ENCODE measurements at regions of chr9 and their contacts with region 1.

Region 1: DNA sequence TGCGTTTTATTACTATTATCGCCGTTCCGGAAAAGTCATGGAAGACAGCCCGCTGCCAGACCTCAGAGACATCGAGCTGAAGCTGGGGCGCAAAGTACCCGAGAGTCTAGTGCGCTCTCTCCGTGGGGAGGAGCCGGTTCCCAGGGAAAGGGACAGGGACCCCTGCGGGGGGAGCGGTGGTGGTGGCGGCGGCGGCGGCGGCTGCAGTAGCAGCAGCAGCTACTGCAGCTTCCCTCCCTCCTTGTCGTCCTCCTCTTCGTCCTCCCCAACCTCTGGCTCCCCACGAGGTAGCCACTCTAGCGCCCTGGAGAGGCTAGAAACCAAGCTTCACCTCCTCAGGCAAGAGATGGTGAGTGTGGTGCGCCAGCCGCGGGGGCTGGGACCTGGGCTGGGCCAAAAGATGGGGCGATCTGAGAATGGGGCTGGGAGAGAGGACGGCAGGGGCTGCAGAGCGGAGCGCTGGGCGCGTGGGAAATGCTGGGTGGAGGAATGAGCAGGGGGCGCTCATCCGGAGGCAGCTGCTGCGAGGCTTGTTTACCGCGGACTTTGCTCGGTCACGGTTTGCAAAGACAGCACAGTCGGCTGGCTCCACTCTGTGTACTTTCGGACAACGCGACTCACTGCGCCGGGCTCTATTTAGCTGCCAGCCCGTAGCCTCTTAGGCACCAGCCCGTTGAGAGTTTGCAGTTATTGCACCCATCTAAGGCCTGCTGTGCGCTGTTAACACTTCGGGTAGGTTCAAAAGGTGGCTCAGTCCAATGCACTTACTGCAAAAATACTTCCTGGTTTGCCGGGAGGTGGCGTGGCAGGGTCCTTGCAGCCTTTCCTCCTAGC is 1.1 kb downstream of the LURAP1L start:
- DNase-seq: peak; percentile 62
- H3K4me3 ChIP-seq: peak overlapping the region; percentile 49
- H3K4me3 Mint-ChIP-seq: peak overlapping the region; percentile 89
- H3K27ac Mint-ChIP-seq: no peak overlapping the region
- H3K4me1 ChIP-seq: no peaks in the 10 kb centered on the region; the same call in 1 of the 2 replicates
- H3K4me1 Mint-ChIP-seq: no peaks in the 10 kb centered on the region
- H3K27me3 ChIP-seq: no peaks in the 10 kb centered on the region
- H3K27me3 Mint-ChIP-seq: no peaks in the 10 kb centered on the region
- CTCF ChIP-seq: peak in 1 of 2 experiments; percentile 33

Region 2: DNA sequence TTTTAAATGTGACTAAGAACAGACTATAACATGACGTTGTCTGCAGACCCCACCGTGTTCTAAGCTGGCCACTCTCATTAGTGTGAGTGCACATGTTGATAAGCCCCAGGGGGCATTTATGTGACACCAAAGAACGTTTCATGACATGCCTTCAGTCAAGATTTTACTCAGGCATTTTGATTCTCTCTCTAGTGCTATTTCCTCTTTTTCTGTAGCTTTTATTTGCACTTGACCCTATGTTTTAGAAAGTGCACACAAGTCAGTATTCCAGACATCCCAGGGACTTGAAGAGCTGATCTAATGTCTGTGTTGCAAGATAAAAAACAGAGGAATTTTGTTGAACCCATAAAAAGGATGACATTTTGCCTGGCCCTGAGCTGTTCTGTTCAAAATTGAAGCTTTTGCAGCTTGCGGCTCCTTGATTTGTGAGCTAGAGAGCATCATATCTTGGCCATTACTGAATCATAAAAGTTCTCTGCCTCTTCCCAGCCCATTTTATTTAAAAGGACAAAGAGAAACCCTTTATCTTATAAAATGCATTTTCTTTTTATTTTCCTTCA is 163.6 kb before region 1 on chr9:
- CTCF ChIA-PET with region 1: no interaction called
- POLR2A ChIA-PET with region 1: no interaction called
- intact Hi-C with region 1: no loop called
- DNase-seq: no peak
- H3K4me3 ChIP-seq: no peak overlapping the region
- H3K4me3 Mint-ChIP-seq: no peak overlapping the region
- H3K27ac Mint-ChIP-seq: no peak overlapping the region
- H3K4me1 ChIP-seq: no peaks in the 10 kb centered on the region
- H3K4me1 Mint-ChIP-seq: peaks cover 6% of the 10 kb centered on the region
- H3K27me3 ChIP-seq: no peaks in the 10 kb centered on the region
- H3K27me3 Mint-ChIP-seq: no peaks in the 10 kb centered on the region
- CTCF ChIP-seq: no peak

Region 3: GRCh38 chr9:12813960-12814876 is 38.3 kb after region 1 on chr9:
- CTCF ChIA-PET with region 1: no interaction called
- POLR2A ChIA-PET with region 1: no interaction called
- intact Hi-C with region 1: loop called (anchors 1 kb)
- DNase-seq: peak; percentile 45 to 46
- H3K4me3 ChIP-seq: no peak overlapping the region
- H3K4me3 Mint-ChIP-seq: no peak overlapping the region
- H3K27ac Mint-ChIP-seq: peak overlapping the region; percentile 82
- H3K4me1 ChIP-seq: no peaks in the 10 kb centered on the region
- H3K4me1 Mint-ChIP-seq: no peaks in the 10 kb centered on the region
- H3K27me3 ChIP-seq: no peaks in the 10 kb centered on the region
- H3K27me3 Mint-ChIP-seq: no peaks in the 10 kb centered on the region
- CTCF ChIP-seq: no peak

Region 4: DNA sequence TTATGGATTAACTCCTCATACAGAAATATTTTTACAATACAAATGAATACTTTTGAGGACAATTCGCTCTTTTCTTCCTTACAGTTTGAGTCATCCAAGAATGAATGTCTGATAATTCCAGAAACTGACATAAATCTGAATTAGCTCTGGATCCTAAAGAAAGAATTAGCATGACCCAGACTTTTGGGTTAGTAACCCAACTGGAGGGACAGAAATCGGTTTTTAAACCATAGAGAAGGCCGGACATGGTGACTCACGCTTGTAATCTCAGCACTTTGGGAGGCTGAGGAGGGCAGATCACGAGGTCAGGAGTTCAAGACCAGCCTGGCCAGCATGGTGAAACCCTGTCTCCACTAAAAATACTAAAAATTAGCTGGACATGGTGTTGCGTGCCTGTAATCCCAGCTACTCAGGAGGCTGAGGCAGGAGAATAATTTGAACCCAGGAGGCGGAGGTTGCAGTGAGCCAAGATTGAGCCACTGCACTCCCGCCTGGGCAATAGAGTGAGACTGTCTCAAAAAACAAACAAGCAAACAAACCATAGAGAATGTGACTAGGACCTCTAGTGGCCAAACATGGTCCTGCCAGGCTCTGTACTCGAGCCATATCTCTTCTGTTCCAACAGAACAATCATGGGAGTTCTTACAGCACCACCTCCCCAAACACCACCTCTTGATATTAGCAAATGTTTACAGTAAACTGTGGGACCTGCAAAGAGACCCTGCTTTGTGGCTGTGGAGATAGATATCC is 43.7 kb after region 1 on chr9:
- CTCF ChIA-PET with region 1: no interaction called
- POLR2A ChIA-PET with region 1: no interaction called
- intact Hi-C with region 1: loop called (anchors 1 kb)
- DNase-seq: peak in 1 of 2 experiments; percentile 19
- H3K4me3 ChIP-seq: no peak overlapping the region
- H3K4me3 Mint-ChIP-seq: no peak overlapping the region
- H3K27ac Mint-ChIP-seq: no peak overlapping the region
- H3K4me1 ChIP-seq: no peaks in the 10 kb centered on the region
- H3K4me1 Mint-ChIP-seq: no peaks in the 10 kb centered on the region
- H3K27me3 ChIP-seq: no peaks in the 10 kb centered on the region
- H3K27me3 Mint-ChIP-seq: no peaks in the 10 kb centered on the region
- CTCF ChIP-seq: peak; percentile 26 to 31

Region 5: DNA sequence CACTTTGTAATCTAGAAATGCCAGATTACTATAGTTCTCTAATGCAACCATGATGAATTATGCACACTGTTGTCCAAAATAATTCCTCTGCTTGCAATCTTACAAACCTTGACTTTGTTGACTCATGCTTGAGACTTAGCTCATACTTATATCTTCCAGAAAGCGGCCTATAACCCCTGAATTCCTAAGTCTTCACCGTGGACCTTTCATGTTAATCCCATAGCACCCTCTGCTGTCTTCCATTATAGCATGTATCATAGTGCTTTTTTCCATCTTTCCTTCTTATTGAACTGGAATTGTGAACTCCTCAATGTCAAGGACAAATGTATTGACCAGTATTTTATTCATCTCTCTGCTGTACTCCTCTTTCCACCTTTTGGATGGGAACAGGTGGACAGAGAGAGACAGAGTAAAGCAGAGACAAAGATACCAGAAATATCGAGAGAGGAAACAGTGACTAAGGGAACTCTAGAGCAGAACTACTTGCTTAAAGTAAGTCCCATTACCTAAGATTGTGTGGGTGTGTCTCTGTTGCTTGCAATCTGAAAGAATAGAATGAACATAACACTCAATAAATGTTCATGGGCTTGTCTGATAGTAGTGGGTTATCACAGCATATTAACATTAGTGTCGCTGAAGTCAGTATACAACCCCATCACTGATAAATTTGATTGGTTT is 109.0 kb after region 1 on chr9:
- CTCF ChIA-PET with region 1: no interaction called
- POLR2A ChIA-PET with region 1: no interaction called
- intact Hi-C with region 1: loop called (anchors 1 kb)
- DNase-seq: peak in 1 of 2 experiments; percentile 5
- H3K4me3 ChIP-seq: no peak overlapping the region
- H3K4me3 Mint-ChIP-seq: no peak overlapping the region
- H3K27ac Mint-ChIP-seq: no peak overlapping the region
- H3K4me1 ChIP-seq: no peaks in the 10 kb centered on the region
- H3K4me1 Mint-ChIP-seq: no peaks in the 10 kb centered on the region
- H3K27me3 ChIP-seq: no peaks in the 10 kb centered on the region
- H3K27me3 Mint-ChIP-seq: no peaks in the 10 kb centered on the region
- CTCF ChIP-seq: peak in 1 of 2 experiments; percentile 31

Measured in Caco-2 (cell line).